Common myeloid progenitor, CD34-positive (primary cell): ENCODE measurements at regions of chr17 and their contacts with region 1.

Region 1: DNA sequence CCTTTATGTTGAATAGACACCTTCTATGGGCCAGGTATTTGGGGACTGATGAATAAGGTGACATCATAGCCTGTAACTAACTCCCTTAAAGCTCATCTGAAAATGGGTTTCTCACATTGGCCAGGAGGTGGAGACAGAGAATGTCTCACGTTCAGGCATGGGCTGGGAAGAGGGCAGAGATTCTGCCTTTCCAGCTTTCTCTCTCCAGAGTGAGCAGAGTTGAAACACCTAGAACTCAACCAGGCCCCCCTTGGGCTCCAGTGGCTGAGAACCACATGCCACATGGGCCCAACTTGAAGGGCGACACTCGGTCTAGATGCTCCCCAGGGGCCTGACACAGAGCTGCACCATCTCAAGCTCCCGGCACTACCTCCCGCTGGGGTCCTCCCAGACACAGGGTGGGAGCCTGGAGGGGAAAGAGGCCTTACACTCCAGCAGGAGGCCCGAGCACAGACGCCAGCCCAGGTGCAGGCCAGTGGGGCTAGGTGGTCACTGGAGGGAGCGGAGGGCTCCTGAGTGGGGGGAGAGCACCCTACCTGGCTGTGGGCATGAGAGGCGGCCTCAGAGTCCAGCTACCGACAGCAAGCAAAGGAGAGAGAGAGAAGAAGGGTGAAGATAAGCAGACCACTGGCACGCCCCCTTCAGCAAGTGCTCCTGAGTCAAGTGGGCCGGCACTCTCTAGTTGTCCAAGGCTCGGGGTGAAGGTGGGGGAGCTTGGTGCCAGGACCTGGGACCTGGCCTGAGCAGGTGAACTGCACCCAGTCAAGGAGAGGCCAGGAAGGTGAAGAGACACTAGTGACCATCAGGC is 55.9 kb downstream of the MYO18A start:
- DNase-seq: peak; percentile 72 to 85 (median 83)
- H3K4me3 ChIP-seq: no peak overlapping the region
- H3K27ac ChIP-seq: peak overlapping the region in 1 of 2 experiments; percentile 55
- H3K4me1 ChIP-seq: peaks cover 2 to 52% (median 33%) of the 10 kb centered on the region in 4 experiments
- H3K27me3 ChIP-seq: no peaks in the 10 kb centered on the region

Region 2: DNA sequence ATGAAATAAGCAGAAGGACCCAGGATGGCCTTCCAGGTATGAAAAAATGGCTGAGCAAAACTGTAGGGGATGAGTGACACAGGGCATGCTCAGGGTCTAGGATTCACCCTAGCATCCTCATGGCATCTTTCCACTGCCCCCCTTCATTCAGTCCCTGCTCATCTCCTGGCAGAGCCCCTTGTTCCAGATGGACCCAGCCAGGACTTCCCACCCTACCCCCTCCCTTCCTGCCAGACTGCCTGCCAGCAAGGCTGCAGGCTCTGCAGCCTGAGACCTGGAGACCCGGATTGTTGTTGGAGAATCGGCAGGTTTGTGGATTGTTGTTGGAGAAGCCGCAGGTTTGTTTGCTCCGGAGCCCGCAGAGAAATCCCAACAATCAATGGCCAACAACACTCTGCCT is 125.1 kb before region 1 on chr17:
- CTCF ChIA-PET with region 1: no interaction called
- POLR2A ChIA-PET with region 1: no interaction called
- DNase-seq: no peak
- H3K4me3 ChIP-seq: no peak overlapping the region
- H3K27ac ChIP-seq: no peak overlapping the region
- H3K4me1 ChIP-seq: no peaks in the 10 kb centered on the region
- H3K27me3 ChIP-seq: peaks cover 0 to 58% (median 22%) of the 10 kb centered on the region in 5 experiments

Region 3: GRCh38 chr17:29111816-29112499 is 12.4 kb before region 1 on chr17:
- CTCF ChIA-PET with region 1: interaction called, 79 read pairs
- POLR2A ChIA-PET with region 1: interaction called, 3 read pairs
- DNase-seq: peak; percentile 48 to 66 (median 58)
- H3K4me3 ChIP-seq: no peak overlapping the region
- H3K27ac ChIP-seq: peak overlapping the region in 1 of 2 experiments; percentile 39
- H3K4me1 ChIP-seq: peaks cover 0 to 8% (median 0%) of the 10 kb centered on the region in 4 experiments
- H3K27me3 ChIP-seq: no peaks in the 10 kb centered on the region

Region 4: GRCh38 chr17:29148790-29149430 is 24.6 kb after region 1 on chr17:
- CTCF ChIA-PET with region 1: interaction called, 673 read pairs
- POLR2A ChIA-PET with region 1: interaction called, 7 read pairs
- DNase-seq: peak; percentile 85 to 87 (median 86)
- H3K4me3 ChIP-seq: peak overlapping the region; percentile 31 to 82 (median 61)
- H3K27ac ChIP-seq: peak overlapping the region; percentile 59 to 82
- H3K4me1 ChIP-seq: peaks cover 15 to 61% (median 45%) of the 10 kb centered on the region in 4 experiments
- H3K27me3 ChIP-seq: no peaks in the 10 kb centered on the region

Region 5: GRCh38 chr17:29155227-29155965 is 31.1 kb after region 1 on chr17:
- CTCF ChIA-PET with region 1: interaction called, 673 read pairs
- POLR2A ChIA-PET with region 1: no interaction called
- DNase-seq: peak in 2 of 3 donors; percentile 48 to 57
- H3K4me3 ChIP-seq: no peak overlapping the region
- H3K27ac ChIP-seq: no peak overlapping the region
- H3K4me1 ChIP-seq: peaks cover 4 to 45% (median 26%) of the 10 kb centered on the region in 4 experiments
- H3K27me3 ChIP-seq: no peaks in the 10 kb centered on the region

Region 6: DNA sequence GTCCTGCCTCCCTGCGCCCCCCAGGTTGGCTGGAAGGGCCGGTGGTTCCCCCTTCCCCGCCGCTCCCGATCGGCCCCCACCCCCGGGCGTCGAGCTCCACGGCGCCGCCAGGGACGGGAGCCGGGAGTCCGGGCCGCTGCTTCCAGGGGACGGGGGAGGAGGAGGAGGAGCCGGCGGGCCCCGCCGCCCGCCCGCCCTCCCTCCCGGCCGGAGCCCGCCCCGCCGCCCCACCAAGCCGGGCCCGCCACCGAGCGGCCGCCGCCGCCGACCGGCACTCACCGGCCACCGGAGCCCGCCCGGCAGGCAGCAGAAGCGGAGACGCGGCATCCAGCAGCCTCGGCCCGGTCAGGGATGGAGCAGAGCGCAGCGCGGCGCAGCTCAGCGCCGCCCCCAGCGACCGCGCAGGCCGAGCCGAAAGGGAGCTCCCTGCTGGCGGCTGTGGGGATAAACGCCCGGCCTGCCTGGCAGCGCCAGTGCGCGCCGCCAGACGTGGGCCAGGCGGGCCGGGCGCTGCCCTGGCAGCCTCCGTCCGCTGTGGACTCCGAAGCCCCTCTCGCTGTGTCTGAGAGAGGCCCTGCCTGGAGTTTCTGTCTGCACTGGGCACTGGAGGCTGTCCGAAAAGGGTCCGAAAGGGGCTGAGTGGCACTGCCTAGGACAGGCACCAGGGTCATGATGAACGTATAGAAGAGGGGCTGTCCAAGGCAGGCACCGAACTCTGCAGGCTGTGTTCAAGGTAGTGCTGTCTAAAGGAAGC is 55.9 kb after region 1 on chr17 and contains the start of gene MYO18A:
- CTCF ChIA-PET with region 1: interaction called, 16 read pairs
- POLR2A ChIA-PET with region 1: no interaction called
- DNase-seq: peak; percentile 70 to 77 (median 76)
- H3K4me3 ChIP-seq: peak within 1 kb of the TSS; percentile 11 to 69 (median 57)
- H3K27ac ChIP-seq: no peak within 1 kb of the TSS
- H3K4me1 ChIP-seq: peaks cover 2 to 55% (median 37%) of the 10 kb centered on the region in 4 experiments
- H3K27me3 ChIP-seq: no peaks in the 10 kb centered on the region